Right ventricle myocardium inferior (tissue), 1 donor: ENCODE measurements at regions of chr5 and their contacts with region 1.

Region 1: GRCh38 chr5:169909945-169910344 is 70.3 kb downstream of the INSYN2B start:
- DNase-seq: no peak
- ATAC-seq: no peak

Region 2: DNA sequence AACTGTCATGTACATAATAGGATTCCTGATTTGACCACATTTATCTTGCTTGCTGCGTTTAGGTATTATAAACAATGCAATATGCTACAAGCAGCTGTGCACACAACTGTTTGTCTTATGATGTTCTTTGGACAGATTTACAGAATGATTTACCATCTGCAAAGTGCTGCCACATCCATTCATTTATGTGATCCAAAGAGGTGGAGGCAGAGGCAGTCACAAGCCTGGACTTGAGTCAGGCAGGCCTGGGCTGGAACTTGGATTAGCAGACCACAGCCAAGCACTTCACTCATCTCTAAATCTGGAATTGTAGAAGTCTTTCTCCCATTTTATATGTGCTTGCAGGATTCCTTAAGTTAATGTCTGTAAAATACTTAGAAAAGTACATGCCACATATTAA is 78.6 kb before region 1 on chr5:
- intact Hi-C with region 1: loop called (anchors 2 kb)
- DNase-seq: no peak
- ATAC-seq: no peak